ENCODE measurements at regions of chr7 and their contacts with region 1.

Region 1: DNA sequence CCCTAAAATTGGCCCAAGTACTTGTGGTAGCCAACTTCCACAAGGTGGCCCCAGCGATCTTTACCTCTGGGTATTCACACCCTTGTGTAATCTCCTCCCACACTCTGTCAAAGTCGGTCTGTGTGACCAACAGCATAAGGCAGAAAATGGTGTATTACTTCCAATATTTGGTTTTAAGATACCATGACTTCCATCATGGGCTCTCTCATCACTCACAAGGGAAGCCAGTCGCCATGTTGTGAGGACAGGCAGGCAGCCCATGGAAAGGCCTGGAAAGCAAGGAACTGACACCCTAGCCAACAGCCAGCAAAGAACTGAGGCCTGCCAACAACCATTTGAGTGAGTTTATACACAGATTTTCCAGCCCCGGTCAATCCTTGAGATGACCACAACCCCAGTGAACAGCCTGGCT is 91.0 kb upstream of the KMT2E start:
- DNase-seq: peak; percentile 51 to 82
- ATAC-seq: peak; percentile 85 to 94 (median 92)
- H3K4me3 ChIP-seq: no peak overlapping the region
- H3K27ac ChIP-seq: peak overlapping the region in 8 of 10 donors; percentile 3 to 71 (median 56)
- H3K4me1 ChIP-seq: peaks cover 0 to 18% (median 13%) of the 10 kb centered on the region in 9 donors
- H3K27me3 ChIP-seq: no peaks in the 10 kb centered on the region
- CTCF ChIP-seq: peak; percentile 51 to 84 (median 70)

Region 2: DNA sequence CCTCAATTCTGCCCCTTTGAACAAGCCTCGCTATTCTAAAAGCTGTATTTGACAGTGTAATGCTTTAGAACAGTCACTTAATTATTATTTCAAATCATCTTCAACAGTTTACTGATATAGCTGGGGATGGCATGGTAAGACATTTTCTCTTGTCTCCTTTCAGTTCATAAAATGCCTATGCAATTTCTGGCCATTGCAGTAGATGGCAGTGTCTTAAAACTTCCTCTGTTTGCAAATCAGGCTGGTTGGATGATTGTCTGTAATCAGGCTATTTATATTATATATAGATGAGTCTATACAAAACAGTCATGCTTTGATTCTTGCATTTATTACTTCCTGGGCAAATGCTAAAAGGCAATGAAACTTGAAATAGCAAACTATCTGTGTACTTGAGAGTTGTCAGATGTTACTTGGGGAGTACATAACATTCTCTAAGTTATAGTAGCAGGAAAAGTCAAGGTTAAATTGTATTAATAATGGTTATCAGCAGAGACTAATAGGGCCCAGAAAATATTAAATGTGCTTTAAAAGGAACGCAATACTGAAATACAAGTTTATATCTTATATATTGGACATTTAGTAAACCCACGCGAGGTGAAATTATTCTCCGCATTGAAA is 650.1 kb before region 1 on chr7:
- intact Hi-C with region 1: loop called in 1 of 10 experiments (anchors 5 kb)
- DNase-seq: no peak
- ATAC-seq: no peak
- H3K4me3 ChIP-seq: no peak overlapping the region
- H3K27ac ChIP-seq: no peak overlapping the region
- H3K4me1 ChIP-seq: no peaks in the 10 kb centered on the region
- H3K27me3 ChIP-seq: peaks cover 0 to 8% (median 0%) of the 10 kb centered on the region in 7 donors
- CTCF ChIP-seq: peak in 8 of 9 donors; percentile 11 to 65 (median 43)

Region 3: DNA sequence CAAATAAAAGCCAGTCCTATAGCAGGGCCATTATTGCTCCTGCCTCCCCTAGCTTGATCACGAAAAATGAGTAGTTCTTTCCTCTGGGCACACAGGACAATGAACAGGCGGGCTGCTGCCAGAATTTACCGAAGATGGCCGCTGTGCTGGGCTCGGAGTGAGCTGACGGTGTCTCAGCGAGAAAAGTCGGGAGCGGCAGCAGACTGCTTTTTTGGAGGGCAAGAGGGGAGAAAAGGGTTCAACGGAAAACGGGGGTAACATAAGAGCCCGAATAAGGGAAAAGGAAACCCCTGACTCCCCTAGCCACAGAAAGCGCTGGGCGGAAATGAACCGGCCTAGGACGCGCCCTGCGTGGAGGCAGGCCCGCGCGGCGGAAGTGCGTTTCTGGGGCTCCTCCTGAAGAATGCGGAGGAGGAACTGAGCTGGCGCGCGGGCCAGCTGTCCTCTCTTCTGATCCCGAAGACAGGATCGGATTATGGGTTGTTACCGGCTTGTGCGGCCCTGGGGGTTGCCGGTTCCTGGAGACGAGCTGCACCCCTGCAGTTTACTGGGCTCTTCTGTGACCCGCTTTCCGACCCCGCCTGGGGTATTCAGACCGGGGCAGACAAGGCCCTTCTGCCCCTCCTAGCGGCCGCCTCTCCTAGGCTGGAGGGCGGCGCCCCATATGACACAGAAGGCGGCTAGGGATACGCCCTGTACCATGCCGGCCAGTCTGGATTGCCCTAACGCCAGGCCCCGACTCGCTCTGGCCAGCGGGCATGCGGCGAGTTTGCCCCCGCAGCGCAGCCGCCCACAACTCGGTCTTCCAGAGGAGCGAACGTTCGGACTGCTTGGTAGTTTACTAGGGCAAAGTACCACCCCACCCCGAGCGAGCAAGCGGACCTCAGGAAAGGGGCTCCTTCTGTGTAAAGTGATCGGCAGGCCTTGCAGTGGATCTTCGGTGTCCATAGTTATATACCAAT is 60.8 kb after region 1 on chr7:
- intact Hi-C with region 1: loop called in 1 of 10 experiments (anchors 2 kb)
- DNase-seq: peak; percentile 90 to 91
- ATAC-seq: peak; percentile 93 to 97 (median 96)
- H3K4me3 ChIP-seq: peak overlapping the region; percentile 34 to 73 (median 60)
- H3K27ac ChIP-seq: peak overlapping the region; percentile 95 to 99 (median 98)
- H3K4me1 ChIP-seq: peaks cover 9 to 93% (median 57%) of the 10 kb centered on the region in 9 donors
- H3K27me3 ChIP-seq: no peaks in the 10 kb centered on the region
- CTCF ChIP-seq: peak; percentile 31 to 82 (median 62)

Region 4: GRCh38 chr7:105098863-105099515 is 176.0 kb after region 1 on chr7:
- intact Hi-C with region 1: loop called in 1 of 10 experiments (anchors 10 kb)
- DNase-seq: no peak
- ATAC-seq: peak in 1 of 8 donors; percentile 32
- H3K4me3 ChIP-seq: no peak overlapping the region
- H3K27ac ChIP-seq: peak overlapping the region in 1 of 10 donors; percentile 17
- H3K4me1 ChIP-seq: peaks cover 0 to 45% (median 19%) of the 10 kb centered on the region in 9 donors
- H3K27me3 ChIP-seq: no peaks in the 10 kb centered on the region
- CTCF ChIP-seq: no peak

Region 5: GRCh38 chr7:105429746-105430612 is 507.0 kb after region 1 on chr7:
- intact Hi-C with region 1: loop called in 1 of 10 experiments (anchors 10 kb)
- DNase-seq: peak in 1 of 2 donors; percentile 34
- ATAC-seq: peak in 2 of 8 donors; percentile 42 to 46
- H3K4me3 ChIP-seq: no peak overlapping the region
- H3K27ac ChIP-seq: no peak overlapping the region
- H3K4me1 ChIP-seq: peaks cover 0 to 13% (median 0%) of the 10 kb centered on the region in 9 donors
- H3K27me3 ChIP-seq: no peaks in the 10 kb centered on the region
- CTCF ChIP-seq: peak; percentile 15 to 63 (median 50)

Measured in heart right ventricle (tissue), 16 donors.